Uterus (tissue), 4 donors: ENCODE measurements at regions of chr6 and their contacts with region 1.

Region 1: GRCh38 chr6:4775584-4776494 is at the start of gene CDYL:
- DNase-seq: peak; percentile 84 to 89
- H3K4me3 ChIP-seq: peak within 1 kb of the TSS; percentile 82 to 89
- H3K27ac ChIP-seq: peak within 1 kb of the TSS; percentile 88 to 92
- H3K4me1 ChIP-seq: no peaks in the 10 kb centered on the region
- H3K27me3 ChIP-seq: no peaks in the 10 kb centered on the region
- CTCF ChIP-seq: peak in 3 of 4 experiments; percentile 16 to 40 (median 38)
- POLR2A ChIP-seq: peak; percentile 26 to 65
- total RNA-seq, gene CDYL: 24.1 to 118 (median 42.3) TPM

Region 2: DNA sequence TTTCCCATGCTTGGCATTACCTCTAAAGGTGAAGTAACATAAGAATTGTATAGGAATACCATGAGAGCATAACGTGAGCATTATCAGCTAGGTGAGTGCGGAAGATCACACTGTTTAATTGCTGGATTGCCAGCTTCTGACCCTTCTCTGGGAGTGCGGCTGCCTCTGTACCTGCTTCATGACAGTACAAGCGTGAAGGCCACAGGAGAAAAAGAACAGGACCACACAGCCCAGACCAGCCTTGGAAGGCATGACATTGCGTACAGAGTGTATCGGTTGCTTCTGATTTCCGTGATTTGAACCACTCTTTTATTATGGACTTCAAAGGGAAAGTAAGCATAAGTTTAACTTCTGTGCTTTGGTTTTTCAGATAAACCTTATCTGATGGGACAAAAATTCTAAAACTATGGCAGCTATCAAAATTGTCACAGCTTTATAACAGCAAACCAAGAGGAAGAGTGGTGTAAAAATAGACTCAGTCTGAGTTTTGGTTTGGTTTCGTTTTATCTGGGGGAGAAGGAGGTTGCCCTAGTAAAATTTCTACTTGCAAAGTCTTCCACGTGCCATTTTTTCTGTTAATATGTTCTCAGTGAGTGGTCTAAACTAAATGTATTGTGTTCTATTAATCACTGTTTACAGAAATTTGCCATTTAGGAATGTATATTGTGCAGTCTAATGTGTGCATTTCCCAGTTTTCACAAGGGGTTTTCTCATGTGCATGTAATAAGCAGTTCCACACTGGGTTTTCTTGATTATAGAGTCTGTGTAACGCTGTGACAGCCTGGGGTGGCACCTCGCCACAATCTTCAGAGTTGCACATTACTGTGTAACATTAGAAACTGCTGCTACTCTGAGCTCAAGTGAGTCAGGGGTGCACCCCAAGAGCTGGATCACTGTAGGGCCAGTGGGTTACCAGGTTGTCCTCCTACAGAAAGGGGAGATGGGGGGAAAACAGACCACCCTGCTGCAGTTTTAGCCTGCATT is 130.7 kb after region 1 on chr6:
- intact Hi-C with region 1: loop called (anchors 10 kb)
- DNase-seq: no peak
- H3K4me3 ChIP-seq: no peak overlapping the region
- H3K27ac ChIP-seq: peak overlapping the region; percentile 9 to 87
- H3K4me1 ChIP-seq: peaks cover 5 to 9% of the 10 kb centered on the region in 2 donors
- H3K27me3 ChIP-seq: no peaks in the 10 kb centered on the region
- CTCF ChIP-seq: no peak
- POLR2A ChIP-seq: no peak